ENCODE measurements at regions of chr9 and their contacts with region 1.

Region 1: GRCh38 chr9:14156046-14156445 is 157.9 kb downstream of the NFIB start:
- DNase-seq: no peak
- ATAC-seq: no peak
- H3K4me3 ChIP-seq: no peak overlapping the region
- H3K27ac ChIP-seq: no peak overlapping the region
- H3K4me1 ChIP-seq: no peaks in the 10 kb centered on the region
- H3K27me3 ChIP-seq: no peaks in the 10 kb centered on the region
- CTCF ChIP-seq: no peak

Region 2: DNA sequence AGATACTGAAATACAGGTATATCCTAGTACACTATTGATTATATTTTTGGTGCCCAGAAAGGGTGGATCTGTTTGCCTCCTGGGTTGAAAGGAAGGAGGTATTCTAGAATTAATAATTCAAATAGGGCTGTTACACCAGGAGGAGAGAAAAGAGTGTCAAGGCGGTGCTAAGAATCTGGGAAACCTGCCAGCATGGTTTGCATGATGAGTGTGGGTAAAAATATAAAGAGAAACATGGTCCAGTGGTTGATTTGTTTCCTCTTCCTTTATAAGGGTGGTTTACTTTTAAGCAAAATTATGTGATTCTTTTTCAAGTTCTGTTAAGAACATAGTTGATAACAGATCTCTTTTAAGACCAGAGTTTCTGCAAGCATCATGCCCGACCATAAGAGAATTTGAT is 227.2 kb after region 1 on chr9:
- CTCF ChIA-PET with region 1: no interaction called
- POLR2A ChIA-PET with region 1: interaction called, 12 read pairs
- in situ Hi-C with region 1: no loop called
- intact Hi-C with region 1: no loop called
- DNase-seq: no peak
- ATAC-seq: no peak
- H3K4me3 ChIP-seq: no peak overlapping the region
- H3K27ac ChIP-seq: no peak overlapping the region
- H3K4me1 ChIP-seq: no peaks in the 10 kb centered on the region
- H3K27me3 ChIP-seq: no peaks in the 10 kb centered on the region
- CTCF ChIP-seq: no peak

Measured in Panc1 (cell line).